ENCODE measurements at regions of chr11 and their contacts with region 1.

Region 1: DNA sequence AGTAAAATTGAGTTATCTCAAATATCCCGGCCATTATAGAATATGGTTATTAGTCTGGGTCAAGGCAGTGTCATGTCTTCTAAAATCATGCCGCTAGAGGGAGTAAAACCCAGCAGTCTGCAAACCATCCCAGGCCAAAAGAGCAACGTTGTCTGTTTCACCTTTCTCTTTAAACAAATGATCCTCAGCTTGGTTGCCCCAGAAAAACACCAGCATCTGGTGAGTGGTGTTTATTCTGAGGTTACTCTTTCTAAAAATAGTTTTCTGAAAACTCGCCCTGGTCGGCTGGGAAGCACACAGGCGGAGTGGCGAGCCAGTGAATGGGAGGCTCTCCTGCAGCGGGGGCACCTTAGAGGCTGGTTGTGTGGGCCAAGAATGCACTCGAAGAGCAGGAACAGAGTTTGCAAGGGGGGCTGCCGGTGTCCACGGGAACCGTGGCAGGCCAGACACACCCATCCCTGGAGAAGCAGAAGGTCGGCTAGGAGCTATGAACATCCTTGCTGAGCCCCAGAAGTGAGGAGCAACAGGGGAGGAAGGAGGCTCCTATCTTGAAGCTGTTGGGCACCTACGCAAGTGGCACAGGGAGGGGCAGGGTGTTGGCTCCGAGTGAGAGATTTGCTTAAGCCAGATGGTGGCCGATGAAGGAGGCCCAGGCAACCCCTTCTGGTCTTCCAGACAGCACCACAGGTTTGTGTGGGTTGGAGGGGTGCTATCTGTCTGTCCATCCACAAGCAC is 297.1 kb downstream of the ETS1 start:
- DNase-seq: peak; percentile 50 to 87 (median 81)
- ATAC-seq: peak; percentile 86
- H3K4me3 ChIP-seq: peak overlapping the region; percentile 61
- H3K4me3 Mint-ChIP-seq: peak overlapping the region; percentile 86 to 98 (median 90)
- H3K27ac ChIP-seq: peak overlapping the region; percentile 98
- H3K27ac Mint-ChIP-seq: peak overlapping the region; percentile 93 to 100 (median 98)
- H3K4me1 ChIP-seq: peaks cover 51 to 79% of the 10 kb centered on the region in 2 donors
- H3K4me1 Mint-ChIP-seq: peaks cover 62 to 100% (median 96%) of the 10 kb centered on the region in 7 donors
- H3K27me3 ChIP-seq: no peaks in the 10 kb centered on the region
- H3K27me3 Mint-ChIP-seq: no peaks in the 10 kb centered on the region

Region 2: GRCh38 chr11:128172046-128172878 is 118.0 kb before region 1 on chr11:
- CTCF ChIA-PET with region 1: interaction called, 3 read pairs
- POLR2A ChIA-PET with region 1: interaction called, 3 read pairs
- intact Hi-C with region 1: loop called (anchors 1 to 5 kb)
- DNase-seq: peak; percentile 59 to 82 (median 75)
- ATAC-seq: peak; percentile 85
- H3K4me3 ChIP-seq: no peak overlapping the region
- H3K4me3 Mint-ChIP-seq: no peak overlapping the region
- H3K27ac ChIP-seq: no peak overlapping the region
- H3K27ac Mint-ChIP-seq: peak overlapping the region in 2 of 9 donors; percentile 27 to 70
- H3K4me1 ChIP-seq: no peaks in the 10 kb centered on the region
- H3K4me1 Mint-ChIP-seq: peaks cover 0 to 9% (median 4%) of the 10 kb centered on the region in 7 donors
- H3K27me3 ChIP-seq: no peaks in the 10 kb centered on the region
- H3K27me3 Mint-ChIP-seq: peaks cover 0 to 15% (median 0%) of the 10 kb centered on the region in 5 donors

Region 3: DNA sequence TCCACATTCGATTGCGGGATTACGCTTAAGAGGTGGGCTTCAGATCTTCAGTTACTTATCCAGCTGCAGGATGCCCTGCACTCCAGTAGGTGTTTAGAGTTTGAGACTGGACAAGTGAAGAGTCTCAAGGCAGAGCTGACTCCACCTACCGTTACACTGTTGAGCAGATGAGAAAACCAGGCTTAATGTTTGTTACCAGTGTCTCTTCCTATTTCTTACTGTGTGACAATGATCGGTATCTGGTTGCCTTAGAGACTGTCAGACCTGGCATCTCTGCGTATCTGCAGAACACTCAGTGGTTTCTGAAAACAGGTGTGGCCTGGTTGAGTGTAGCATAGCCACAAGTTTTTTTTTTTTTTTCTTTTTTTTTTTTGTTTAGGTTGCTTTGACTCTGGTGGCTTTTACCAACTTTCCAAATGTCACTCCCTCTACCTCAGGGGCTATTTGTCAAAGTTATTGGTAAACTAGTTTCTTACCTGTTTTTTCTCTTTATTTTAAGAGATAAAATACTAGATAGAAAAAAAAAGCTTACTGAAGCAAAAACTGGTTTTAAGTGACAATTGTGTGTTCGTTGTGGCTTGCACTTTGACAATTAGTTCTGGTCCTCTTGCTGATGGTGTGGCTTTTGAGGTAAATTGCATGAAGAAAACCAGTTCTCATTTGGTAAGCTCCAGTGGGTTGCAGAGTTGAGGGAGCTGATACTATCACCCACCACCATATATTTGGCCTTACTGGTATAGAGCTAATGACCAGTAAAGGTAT is 12.3 kb after region 1 on chr11:
- CTCF ChIA-PET with region 1: interaction called, 11 read pairs
- POLR2A ChIA-PET with region 1: interaction called, 62 read pairs
- intact Hi-C with region 1: loop called (anchors 1 kb)
- DNase-seq: peak; percentile 39 to 97 (median 92)
- ATAC-seq: peak; percentile 92
- H3K4me3 ChIP-seq: peak overlapping the region; percentile 52
- H3K4me3 Mint-ChIP-seq: peak overlapping the region; percentile 81 to 98 (median 93)
- H3K27ac ChIP-seq: peak overlapping the region; percentile 98
- H3K27ac Mint-ChIP-seq: peak overlapping the region; percentile 93 to 100 (median 98)
- H3K4me1 ChIP-seq: peaks cover 83 to 95% of the 10 kb centered on the region in 2 donors
- H3K4me1 Mint-ChIP-seq: peaks cover 52 to 92% (median 88%) of the 10 kb centered on the region in 7 donors
- H3K27me3 ChIP-seq: no peaks in the 10 kb centered on the region
- H3K27me3 Mint-ChIP-seq: no peaks in the 10 kb centered on the region

Region 4: DNA sequence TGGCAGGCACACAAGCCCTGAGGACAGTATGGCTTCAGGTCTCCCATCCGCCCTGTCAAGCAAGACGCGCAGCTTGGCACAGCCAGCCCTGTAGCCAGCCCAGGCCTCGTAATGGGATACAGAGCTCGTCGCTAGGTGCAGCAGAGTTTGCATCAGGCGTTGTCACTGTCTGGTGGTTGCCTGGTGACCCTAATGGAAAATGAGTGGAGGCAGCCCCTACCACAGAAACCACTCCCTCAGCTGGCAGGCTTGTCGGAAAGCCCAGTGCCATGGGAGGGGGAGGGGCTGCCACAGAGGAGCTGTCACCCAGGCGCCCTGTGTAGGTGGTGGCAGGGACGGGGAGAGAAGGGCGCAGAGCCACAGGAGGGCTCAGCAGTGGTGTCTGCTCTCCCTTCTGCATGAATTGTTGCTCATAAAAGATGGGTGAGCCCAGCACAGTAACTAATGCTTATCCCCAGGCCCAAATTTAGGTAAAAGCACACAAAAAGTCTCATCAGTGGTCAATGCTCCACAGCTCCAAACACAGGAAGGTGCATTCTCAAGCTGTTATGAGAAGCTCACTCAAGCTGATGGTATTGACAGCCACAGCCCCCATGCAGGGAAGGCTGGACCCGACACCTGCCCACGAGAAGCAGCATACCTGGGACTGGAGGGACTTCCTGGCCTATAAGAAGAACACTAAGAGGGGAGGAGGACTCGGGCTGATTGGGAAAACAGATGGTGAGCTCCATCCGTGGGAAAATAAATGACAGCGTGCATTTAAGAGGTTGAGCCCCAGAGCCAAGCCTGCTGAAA is 132.5 kb after region 1 on chr11:
- CTCF ChIA-PET with region 1: interaction called, 3 read pairs
- POLR2A ChIA-PET with region 1: interaction called, 6 read pairs
- intact Hi-C with region 1: loop called in 1 of 2 experiments (anchors 1 kb)
- DNase-seq: peak; percentile 67 to 94 (median 82)
- ATAC-seq: peak; percentile 96
- H3K4me3 ChIP-seq: peak overlapping the region; percentile 25
- H3K4me3 Mint-ChIP-seq: peak overlapping the region; percentile 50 to 86 (median 68)
- H3K27ac ChIP-seq: peak overlapping the region; percentile 56
- H3K27ac Mint-ChIP-seq: peak overlapping the region; percentile 86 to 98 (median 94)
- H3K4me1 ChIP-seq: peaks cover 17 to 33% of the 10 kb centered on the region in 2 donors
- H3K4me1 Mint-ChIP-seq: peaks cover 30 to 86% (median 66%) of the 10 kb centered on the region in 7 donors
- H3K27me3 ChIP-seq: no peaks in the 10 kb centered on the region
- H3K27me3 Mint-ChIP-seq: no peaks in the 10 kb centered on the region

Region 5: DNA sequence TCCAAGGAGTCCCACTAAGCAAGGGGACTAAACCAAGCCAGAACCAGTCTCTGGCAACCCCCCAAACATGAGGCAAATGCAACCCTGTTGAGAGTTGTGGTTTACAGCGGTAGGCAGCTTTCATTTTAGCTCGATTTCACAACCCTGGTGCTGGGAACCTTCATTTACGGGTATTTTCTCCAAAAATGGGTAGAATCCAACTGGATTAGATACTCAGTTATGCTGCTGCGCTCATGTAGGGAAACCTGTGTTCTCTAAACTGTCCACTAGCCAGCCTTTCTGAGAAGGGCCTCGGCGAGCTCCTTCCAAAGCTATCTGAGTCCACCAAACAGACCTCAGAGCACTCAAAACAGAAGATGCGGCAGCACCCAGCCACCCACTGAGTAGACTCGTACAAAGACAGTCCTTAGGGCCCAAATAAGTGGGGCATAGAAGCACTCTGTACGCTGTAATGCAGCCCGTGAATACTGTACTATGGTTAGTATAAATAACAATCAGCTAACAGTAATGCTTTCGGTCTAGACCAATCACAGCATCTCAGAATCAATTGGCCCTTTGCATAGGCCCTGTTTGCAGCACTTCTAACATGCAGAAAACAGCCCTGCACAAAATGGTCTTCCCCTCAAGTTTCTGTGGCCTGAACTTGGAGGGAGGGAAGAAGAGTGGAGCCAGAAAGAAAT is 192.4 kb after region 1 on chr11:
- CTCF ChIA-PET with region 1: interaction called, 7 read pairs
- POLR2A ChIA-PET with region 1: interaction called, 355 read pairs
- intact Hi-C with region 1: loop called in 1 of 2 experiments (anchors 2 kb)
- DNase-seq: peak in 6 of 9 donors; percentile 62 to 86 (median 68)
- ATAC-seq: peak; percentile 74
- H3K4me3 ChIP-seq: peak overlapping the region; percentile 47
- H3K4me3 Mint-ChIP-seq: peak overlapping the region; percentile 73 to 99 (median 82)
- H3K27ac ChIP-seq: peak overlapping the region; percentile 97
- H3K27ac Mint-ChIP-seq: peak overlapping the region; percentile 92 to 99 (median 98)
- H3K4me1 ChIP-seq: peaks cover 89 to 95% of the 10 kb centered on the region in 2 donors
- H3K4me1 Mint-ChIP-seq: peaks cover 82 to 100% (median 99%) of the 10 kb centered on the region in 7 donors
- H3K27me3 ChIP-seq: no peaks in the 10 kb centered on the region
- H3K27me3 Mint-ChIP-seq: no peaks in the 10 kb centered on the region

Region 6: DNA sequence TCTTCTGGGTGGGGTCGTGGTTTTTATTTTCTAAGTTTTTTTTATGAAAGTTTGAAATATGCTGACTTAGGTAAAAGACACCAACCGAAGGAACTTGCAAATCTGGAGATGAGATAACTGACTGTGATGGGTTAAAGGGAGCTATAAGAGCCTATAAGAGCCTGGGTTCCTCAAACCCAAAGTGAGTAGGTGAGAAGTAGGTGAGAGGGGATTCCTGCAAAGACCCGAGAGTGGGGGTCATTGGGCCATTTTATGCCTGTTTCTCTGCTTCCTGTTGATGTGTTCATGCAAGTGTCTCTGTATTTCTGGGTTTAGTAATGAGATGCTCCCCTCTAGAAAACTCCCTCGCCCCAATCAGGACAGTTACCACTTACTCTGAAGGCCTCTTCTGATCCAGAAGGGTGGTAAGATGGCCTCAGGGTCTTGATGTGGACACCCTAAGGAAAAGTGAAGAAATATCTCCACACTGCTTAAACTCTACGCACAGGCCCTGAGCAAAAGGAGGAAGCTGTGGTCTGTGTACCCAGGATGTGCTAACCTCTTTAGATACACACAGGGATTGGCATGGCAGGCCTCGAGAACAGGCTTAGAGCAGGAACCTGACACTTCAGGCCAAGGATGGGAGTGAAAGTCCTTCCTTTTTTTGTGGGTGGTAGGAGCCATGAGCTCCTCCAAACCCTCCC is 405.4 kb after region 1 on chr11:
- CTCF ChIA-PET with region 1: no interaction called
- POLR2A ChIA-PET with region 1: no interaction called
- intact Hi-C with region 1: loop called in 1 of 2 experiments (anchors 2 kb)
- DNase-seq: peak in 7 of 9 donors; percentile 39 to 63 (median 52)
- ATAC-seq: peak; percentile 75
- H3K4me3 ChIP-seq: peak overlapping the region; percentile 82
- H3K4me3 Mint-ChIP-seq: peak overlapping the region; percentile 89 to 99 (median 96)
- H3K27ac ChIP-seq: peak overlapping the region; percentile 86
- H3K27ac Mint-ChIP-seq: peak overlapping the region; percentile 72 to 96 (median 94)
- H3K4me1 ChIP-seq: peaks cover 45 to 53% of the 10 kb centered on the region in 2 donors
- H3K4me1 Mint-ChIP-seq: peaks cover 53 to 75% (median 67%) of the 10 kb centered on the region in 7 donors
- H3K27me3 ChIP-seq: no peaks in the 10 kb centered on the region
- H3K27me3 Mint-ChIP-seq: peaks cover 0 to 22% (median 0%) of the 10 kb centered on the region in 5 donors

Region 7: GRCh38 chr11:128948589-128948988 is 658.3 kb after region 1 on chr11:
- CTCF ChIA-PET with region 1: no interaction called
- POLR2A ChIA-PET with region 1: no interaction called
- intact Hi-C with region 1: no loop called
- DNase-seq: no peak
- ATAC-seq: no peak
- H3K4me3 ChIP-seq: no peak overlapping the region
- H3K4me3 Mint-ChIP-seq: no peak overlapping the region
- H3K27ac ChIP-seq: no peak overlapping the region
- H3K27ac Mint-ChIP-seq: peak overlapping the region in 1 of 9 donors; percentile 45
- H3K4me1 ChIP-seq: no peaks in the 10 kb centered on the region
- H3K4me1 Mint-ChIP-seq: no peaks in the 10 kb centered on the region
- H3K27me3 ChIP-seq: no peaks in the 10 kb centered on the region
- H3K27me3 Mint-ChIP-seq: peaks cover 10 to 28% (median 14%) of the 10 kb centered on the region in 5 donors

Measured in naive thymus-derived CD4-positive, alpha-beta T cell (primary cell).